T-cell (primary cell): ENCODE measurements at regions of chr14 and their contacts with region 1.

Region 1: DNA sequence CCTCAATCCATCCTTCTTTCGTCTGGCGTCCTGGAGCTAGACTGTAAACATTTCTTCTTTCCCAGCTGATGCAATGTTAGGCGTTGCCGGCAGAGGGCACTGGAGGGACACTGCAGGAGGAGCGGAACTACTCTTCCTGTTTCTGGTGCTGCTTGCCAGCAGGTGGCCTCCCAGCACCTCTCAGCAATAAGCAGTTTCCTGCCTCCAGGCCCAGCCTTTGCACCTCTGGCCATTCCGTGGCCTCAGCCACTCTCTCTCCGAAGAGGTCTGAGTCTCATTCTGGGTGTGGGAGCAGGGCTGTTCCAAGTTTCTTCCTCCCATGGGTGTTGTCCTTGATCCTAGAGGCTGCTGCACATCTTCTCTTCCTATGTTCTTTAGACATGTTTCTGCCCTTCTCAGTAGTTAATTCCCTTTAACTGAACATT is 7.5 kb upstream of the ASPG start:
- DNase-seq: peak; percentile 62 to 91 (median 80)
- ATAC-seq: peak; percentile 97 to 98 (median 97)
- H3K4me3 ChIP-seq: no peak overlapping the region
- H3K4me3 Mint-ChIP-seq: peak overlapping the region; percentile 2 to 25 (median 14)
- H3K27ac ChIP-seq: peak overlapping the region; percentile 53
- H3K27ac Mint-ChIP-seq: peak overlapping the region; percentile 50 to 53
- H3K4me1 ChIP-seq: peaks cover 0 to 16% of the 10 kb centered on the region in 2 experiments
- H3K4me1 Mint-ChIP-seq: peaks cover 12 to 24% (median 12%) of the 10 kb centered on the region in 3 donors
- H3K27me3 ChIP-seq: peaks cover 0 to 10% of the 10 kb centered on the region in 2 experiments
- H3K27me3 Mint-ChIP-seq: peaks cover 7 to 8% of the 10 kb centered on the region in 2 donors

Region 2: GRCh38 chr14:103905842-103906456 is 172.1 kb before region 1 on chr14:
- CTCF ChIA-PET with region 1: no interaction called
- POLR2A ChIA-PET with region 1: no interaction called
- DNase-seq: peak in 28 of 35 experiments; percentile 11 to 52 (median 36)
- ATAC-seq: peak in 3 of 4 experiments; percentile 24 to 46 (median 33)
- H3K4me3 ChIP-seq: no peak overlapping the region
- H3K4me3 Mint-ChIP-seq: peak overlapping the region in 2 of 3 donors; percentile 18 to 50
- H3K27ac ChIP-seq: no peak overlapping the region
- H3K27ac Mint-ChIP-seq: peak overlapping the region; percentile 16 to 46
- H3K4me1 ChIP-seq: peaks cover 7 to 27% of the 10 kb centered on the region in 2 experiments
- H3K4me1 Mint-ChIP-seq: peaks cover 25 to 31% (median 29%) of the 10 kb centered on the region in 3 donors
- H3K27me3 ChIP-seq: peaks cover 0 to 7% of the 10 kb centered on the region in 2 experiments
- H3K27me3 Mint-ChIP-seq: peaks cover 4 to 5% of the 10 kb centered on the region in 2 donors

Region 3: DNA sequence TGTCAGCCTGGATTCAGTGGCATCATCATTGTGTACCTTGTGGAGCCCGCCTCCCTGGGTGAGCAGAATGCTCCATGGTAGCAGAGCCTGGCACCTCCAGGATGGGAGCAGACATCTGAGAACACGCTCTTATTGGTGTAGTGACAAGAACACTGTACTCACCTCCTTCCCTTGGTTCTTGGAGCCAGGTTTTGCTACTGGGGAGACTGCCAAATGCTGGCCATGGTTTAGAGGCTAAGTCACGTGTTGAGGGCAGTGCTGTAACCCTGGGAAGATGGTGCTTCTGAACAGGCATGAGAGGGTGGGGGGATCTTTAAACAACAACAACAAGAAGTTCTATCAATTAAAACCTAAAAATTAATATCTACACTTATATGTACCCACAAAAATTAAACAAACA is 40.1 kb before region 1 on chr14:
- CTCF ChIA-PET with region 1: no interaction called
- POLR2A ChIA-PET with region 1: no interaction called
- DNase-seq: no peak
- ATAC-seq: no peak
- H3K4me3 ChIP-seq: no peak overlapping the region
- H3K4me3 Mint-ChIP-seq: no peak overlapping the region
- H3K27ac ChIP-seq: no peak overlapping the region
- H3K27ac Mint-ChIP-seq: peak overlapping the region in 1 of 2 donors; percentile 66
- H3K4me1 ChIP-seq: no peaks in the 10 kb centered on the region
- H3K4me1 Mint-ChIP-seq: no peaks in the 10 kb centered on the region
- H3K27me3 ChIP-seq: peaks cover 0 to 43% of the 10 kb centered on the region in 2 experiments
- H3K27me3 Mint-ChIP-seq: peaks cover 44 to 51% of the 10 kb centered on the region in 2 donors

Region 4: GRCh38 chr14:104563742-104564615 is 485.9 kb after region 1 on chr14:
- CTCF ChIA-PET with region 1: interaction called in 1 of 2 experiments, 19 read pairs
- POLR2A ChIA-PET with region 1: no interaction called
- DNase-seq: peak; percentile 23 to 77 (median 64)
- ATAC-seq: peak; percentile 62 to 81 (median 67)
- H3K4me3 ChIP-seq: no peak overlapping the region
- H3K4me3 Mint-ChIP-seq: peak overlapping the region in 1 of 3 donors; percentile 33
- H3K27ac ChIP-seq: no peak overlapping the region
- H3K27ac Mint-ChIP-seq: no peak overlapping the region
- H3K4me1 ChIP-seq: peaks cover 0 to 9% of the 10 kb centered on the region in 2 experiments
- H3K4me1 Mint-ChIP-seq: peaks cover 0 to 2% (median 2%) of the 10 kb centered on the region in 3 donors
- H3K27me3 ChIP-seq: peaks cover 0 to 68% of the 10 kb centered on the region in 2 experiments
- H3K27me3 Mint-ChIP-seq: peaks cover 11 to 31% of the 10 kb centered on the region in 2 donors